Left cardiac atrium (tissue), 4 donors: ENCODE measurements at regions of chr2 and their contacts with region 1.

Region 1: GRCh38 chr2:71609958-71610357 is 156.6 kb downstream of the DYSF start:
- DNase-seq: no peak
- ATAC-seq: peak in 1 of 2 donors; percentile 17

Region 2: GRCh38 chr2:71545572-71546274 is 64.2 kb before region 1 on chr2:
- intact Hi-C with region 1: no loop called
- DNase-seq: peak; percentile 56
- ATAC-seq: peak; percentile 68 to 80

Region 3: DNA sequence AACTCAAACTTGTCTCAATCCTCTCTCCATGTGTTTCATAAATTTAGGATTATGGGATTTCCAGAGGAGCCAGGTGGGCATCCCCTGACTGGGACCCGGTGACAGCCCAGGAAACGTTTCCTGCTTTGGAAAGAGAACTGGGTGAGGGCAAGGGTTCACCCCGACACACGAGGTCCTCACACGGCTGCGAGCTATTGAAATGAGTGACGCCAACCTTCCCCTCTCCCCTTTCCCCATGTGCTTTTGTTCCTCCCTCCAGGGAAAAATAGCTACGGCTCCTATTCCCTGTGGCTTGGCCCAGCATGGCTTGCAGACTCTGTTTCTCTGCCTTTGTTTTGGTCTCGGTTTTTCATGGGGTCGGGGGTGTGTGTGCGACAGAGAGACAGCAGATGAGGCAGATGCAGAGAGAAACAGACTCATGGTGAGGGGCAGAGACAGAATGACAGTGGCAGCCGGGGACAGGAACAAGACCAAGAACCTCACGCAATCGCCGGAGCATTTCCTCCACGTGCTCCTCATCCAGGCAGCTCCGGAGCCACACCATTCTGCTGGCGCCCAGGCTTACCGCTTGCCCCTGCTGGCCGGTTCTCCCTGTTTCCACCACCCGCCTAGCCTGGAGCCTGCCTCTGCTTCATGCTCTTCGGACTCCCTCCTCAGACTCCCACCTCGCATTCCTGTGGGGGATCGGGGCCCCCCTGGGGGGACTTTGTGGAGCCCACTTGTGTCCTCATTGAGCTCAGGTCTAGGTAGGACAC is 82.0 kb after region 1 on chr2:
- intact Hi-C with region 1: loop called in 1 of 2 experiments (anchors 10 kb)
- DNase-seq: no peak
- ATAC-seq: peak in 1 of 2 donors; percentile 10